ENCODE measurements at regions of chr15 and their contacts with region 1.

Region 1: DNA sequence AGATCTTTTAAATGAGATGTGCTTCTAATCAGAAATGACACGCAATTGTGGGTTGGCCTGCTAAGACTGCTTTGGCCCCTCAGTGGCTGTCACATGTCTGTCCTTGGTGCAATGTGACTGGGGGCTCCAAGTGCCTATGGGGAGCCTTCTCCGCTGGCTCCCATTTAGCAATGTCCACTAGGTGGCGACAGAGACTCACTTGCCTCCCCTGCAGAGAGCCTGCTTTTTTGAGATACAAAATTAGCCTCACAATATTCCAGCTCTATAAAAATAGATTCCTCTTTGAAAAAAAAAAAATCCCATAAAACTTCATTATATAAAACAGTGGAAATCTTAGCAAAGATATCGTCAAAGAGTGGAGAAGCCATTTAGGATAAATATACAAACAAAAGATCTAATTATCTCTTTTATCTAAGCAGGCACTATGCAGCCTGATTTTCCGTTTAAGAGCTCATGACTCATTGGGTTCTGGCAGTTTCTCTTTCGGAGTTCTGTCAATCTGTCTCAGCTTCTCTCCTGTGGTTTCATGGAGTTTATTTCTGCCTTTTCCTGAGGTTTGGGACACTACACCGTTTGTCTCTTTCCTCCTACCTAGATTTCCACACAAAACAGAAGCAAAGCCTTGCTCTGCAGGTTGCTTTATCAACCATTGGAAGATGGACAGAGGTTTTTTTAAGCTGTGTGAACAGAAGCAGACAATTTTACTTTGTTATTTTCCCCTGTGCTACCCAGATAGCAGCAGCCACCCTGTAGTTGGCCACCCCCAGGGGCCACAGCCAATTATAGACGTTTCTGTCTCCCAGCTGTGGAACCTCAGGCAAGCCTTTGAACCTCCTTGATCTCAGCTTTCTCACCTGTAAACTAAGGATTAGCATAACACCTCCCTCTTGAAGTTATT is 68.4 kb upstream of the TNFAIP8L3 start:
- DNase-seq: no peak
- H3K4me3 ChIP-seq: no peak overlapping the region
- H3K27me3 ChIP-seq: peaks cover 4% of the 10 kb centered on the region
- CTCF ChIP-seq: peak; percentile 94

Region 2: GRCh38 chr15:51132384-51133139 is 30.6 kb before region 1 on chr15:
- CTCF ChIA-PET with region 1: interaction called, 26 read pairs
- POLR2A ChIA-PET with region 1: no interaction called
- DNase-seq: peak; percentile 82
- H3K4me3 ChIP-seq: no peak overlapping the region
- H3K27me3 ChIP-seq: peaks cover 2% of the 10 kb centered on the region
- CTCF ChIP-seq: peak; percentile 99

Region 3: DNA sequence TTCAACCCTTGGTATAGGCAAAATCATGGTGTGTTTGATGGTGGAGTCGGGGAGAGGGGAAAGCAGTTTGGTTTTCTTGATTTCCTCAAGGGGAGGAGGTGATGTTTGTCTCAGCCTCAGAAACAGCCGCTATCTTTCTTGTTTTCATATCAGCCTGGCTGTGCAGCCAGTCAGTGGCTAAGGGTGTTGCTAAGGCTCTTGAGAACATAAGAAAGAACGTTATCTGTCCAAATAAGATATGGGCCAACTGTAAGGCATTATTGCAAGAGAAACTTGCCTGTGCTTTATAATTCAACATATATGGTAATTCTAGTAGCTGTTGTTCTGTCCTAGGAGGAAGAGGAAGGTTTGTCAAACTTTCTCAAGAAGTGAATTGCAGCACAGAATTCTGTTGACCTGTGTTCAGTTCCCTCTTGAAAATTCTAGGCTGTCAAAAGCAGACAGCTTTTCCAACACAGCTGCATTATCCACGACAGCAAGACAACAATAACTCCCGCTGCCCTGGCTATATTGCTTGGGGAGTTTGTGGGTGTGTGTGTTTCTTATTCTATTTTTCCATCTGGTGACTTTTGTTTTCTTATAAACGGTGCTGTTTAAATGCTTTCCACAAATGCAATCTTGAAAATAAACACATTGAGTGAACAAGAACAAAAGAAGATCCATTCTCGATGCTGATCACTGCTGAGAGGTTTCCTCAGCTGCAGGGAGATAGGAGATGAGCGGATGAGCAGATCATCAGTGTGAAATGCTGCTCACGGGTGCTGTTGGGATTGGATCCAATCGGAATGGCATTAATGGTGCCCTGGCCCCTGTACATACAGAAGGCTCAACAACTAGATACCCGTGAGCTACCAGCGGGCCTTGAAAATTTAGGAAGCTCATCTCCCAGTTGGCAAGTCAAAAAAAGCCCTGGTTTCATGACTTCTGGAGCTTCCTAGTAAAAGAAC is 22.4 kb after region 1 on chr15:
- CTCF ChIA-PET with region 1: interaction called, 95 read pairs
- POLR2A ChIA-PET with region 1: no interaction called
- DNase-seq: no peak
- H3K4me3 ChIP-seq: no peak overlapping the region
- H3K27me3 ChIP-seq: peaks cover 14% of the 10 kb centered on the region
- CTCF ChIP-seq: no peak

Region 4: GRCh38 chr15:51203797-51204196 is 40.7 kb after region 1 on chr15:
- CTCF ChIA-PET with region 1: interaction called, 281 read pairs
- POLR2A ChIA-PET with region 1: no interaction called
- DNase-seq: peak; percentile 68
- H3K4me3 ChIP-seq: no peak overlapping the region
- H3K27me3 ChIP-seq: peaks cover 2% of the 10 kb centered on the region; the same call in 1 of the 2 replicates
- CTCF ChIP-seq: no peak

Region 5: GRCh38 chr15:51267703-51268083 is 104.6 kb after region 1 on chr15:
- CTCF ChIA-PET with region 1: interaction called, 18 read pairs
- POLR2A ChIA-PET with region 1: no interaction called
- DNase-seq: no peak
- H3K4me3 ChIP-seq: peak overlapping the region; percentile 34
- H3K27me3 ChIP-seq: peaks cover 8% of the 10 kb centered on the region
- CTCF ChIP-seq: no peak

Region 6: DNA sequence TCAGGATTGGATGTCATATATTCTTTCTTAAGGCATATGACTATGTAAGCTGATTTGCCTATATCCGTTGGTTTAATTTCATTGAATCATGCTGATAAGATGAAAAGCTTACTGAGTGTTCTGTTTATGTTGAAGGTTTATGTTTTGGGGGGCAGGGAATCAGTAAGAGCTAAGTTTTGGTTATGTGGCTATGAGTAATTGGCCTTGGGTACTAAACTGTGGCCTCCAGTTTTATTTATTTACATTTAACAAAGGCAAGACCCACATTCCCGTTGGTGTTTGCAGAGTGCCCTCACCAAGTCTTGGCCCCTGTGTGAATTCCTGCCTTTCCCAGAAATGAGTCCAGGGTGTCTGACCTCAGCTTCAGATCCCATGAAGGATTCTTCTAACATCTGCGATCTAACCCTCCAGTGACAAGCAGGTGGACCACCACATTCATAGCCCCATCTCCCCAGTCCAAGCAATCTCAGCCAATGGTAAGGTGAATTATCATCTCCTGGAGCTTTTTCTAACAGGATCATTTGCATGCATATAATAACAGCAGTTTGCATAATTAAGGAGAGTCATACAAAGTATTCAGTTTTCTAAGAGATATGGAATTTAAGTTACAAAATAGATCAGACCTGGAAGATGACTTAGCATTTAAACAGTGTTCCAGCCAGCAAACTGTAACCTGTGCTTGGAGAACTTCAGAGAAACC is 205.8 kb after region 1 on chr15:
- CTCF ChIA-PET with region 1: interaction called, 20 read pairs
- POLR2A ChIA-PET with region 1: no interaction called
- DNase-seq: no peak
- H3K4me3 ChIP-seq: no peak overlapping the region
- H3K27me3 ChIP-seq: no peaks in the 10 kb centered on the region; the same call in 1 of the 2 replicates
- CTCF ChIP-seq: no peak

Region 7: GRCh38 chr15:51401872-51402517 is 238.9 kb after region 1 on chr15:
- CTCF ChIA-PET with region 1: interaction called, 110 read pairs
- POLR2A ChIA-PET with region 1: interaction called, 3 read pairs
- DNase-seq: no peak
- H3K4me3 ChIP-seq: no peak overlapping the region
- H3K27me3 ChIP-seq: peaks cover 13% of the 10 kb centered on the region
- CTCF ChIP-seq: peak; percentile 79